Aorta (tissue), 5 donors: ENCODE measurements at regions of chr6 and their contacts with region 1.

Region 1: GRCh38 chr6:84428300-84428907 is 201.0 kb upstream of the CEP162 start:
- DNase-seq: peak; percentile 63 to 89
- ATAC-seq: peak; percentile 83
- H3K4me3 ChIP-seq: peak overlapping the region in 1 of 2 donors; percentile 41
- H3K27ac ChIP-seq: no peak overlapping the region
- H3K4me1 ChIP-seq: peaks cover 0 to 7% of the 10 kb centered on the region in 2 donors
- H3K27me3 ChIP-seq: no peaks in the 10 kb centered on the region

Region 2: DNA sequence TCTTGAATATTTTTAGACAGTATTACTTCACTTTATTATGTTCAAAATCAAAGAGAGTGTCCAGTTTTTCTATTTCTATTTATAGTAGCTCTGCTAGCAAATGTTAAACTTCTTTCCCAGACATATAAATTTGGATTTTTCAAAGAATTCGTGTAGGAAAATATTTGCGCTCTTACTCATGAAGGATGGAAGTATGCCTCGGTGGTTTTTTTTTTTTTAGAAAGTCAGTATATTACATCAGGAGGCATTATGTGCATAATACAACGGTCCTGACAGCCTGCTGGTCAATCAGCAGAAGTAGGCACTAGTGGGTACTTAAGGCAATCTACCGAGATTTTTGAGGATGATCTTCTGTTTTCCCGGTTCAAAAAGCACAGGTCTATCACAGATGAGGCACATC is 86.7 kb after region 1 on chr6:
- intact Hi-C with region 1: loop called in 1 of 2 experiments (anchors 10 kb)
- DNase-seq: no peak
- ATAC-seq: peak; percentile 60
- H3K4me3 ChIP-seq: peak overlapping the region in 1 of 2 donors; percentile 79
- H3K27ac ChIP-seq: peak overlapping the region; percentile 47 to 76
- H3K4me1 ChIP-seq: peaks cover 3 to 4% of the 10 kb centered on the region in 2 donors
- H3K27me3 ChIP-seq: no peaks in the 10 kb centered on the region

Region 3: GRCh38 chr6:84568971-84569370 is 140.6 kb after region 1 on chr6:
- intact Hi-C with region 1: loop called (anchors 2 kb)
- DNase-seq: no peak
- ATAC-seq: no peak
- H3K4me3 ChIP-seq: no peak overlapping the region
- H3K27ac ChIP-seq: no peak overlapping the region
- H3K4me1 ChIP-seq: no peaks in the 10 kb centered on the region
- H3K27me3 ChIP-seq: no peaks in the 10 kb centered on the region

Region 4: DNA sequence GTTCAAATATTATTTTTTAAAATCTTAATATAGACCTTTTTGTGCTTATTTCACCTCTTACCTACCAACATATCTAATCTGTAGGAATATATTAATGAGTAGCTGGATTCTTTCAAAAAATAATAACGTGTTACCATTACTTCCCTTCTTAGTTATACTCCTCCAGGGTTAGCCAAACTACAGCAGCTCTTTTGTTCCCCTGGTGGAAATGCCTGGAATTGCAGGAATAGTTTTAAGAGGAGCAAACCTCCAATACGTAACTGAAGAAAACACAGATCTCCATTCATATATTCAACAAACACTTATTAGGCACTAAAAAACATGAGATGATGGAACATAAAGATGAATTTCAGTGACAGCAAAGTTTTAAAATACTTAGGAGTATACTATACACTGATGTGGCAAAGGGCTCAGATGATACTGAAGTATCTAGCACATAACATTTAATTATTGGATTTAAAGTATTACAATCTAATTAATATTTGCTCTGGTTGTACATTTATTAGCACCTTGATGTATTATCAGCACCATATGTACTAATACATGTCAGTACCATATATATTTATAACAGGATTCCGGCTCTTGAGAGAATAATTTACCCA is 257.7 kb after region 1 on chr6:
- intact Hi-C with region 1: loop called (anchors 10 kb)
- DNase-seq: no peak
- ATAC-seq: no peak
- H3K4me3 ChIP-seq: no peak overlapping the region
- H3K27ac ChIP-seq: no peak overlapping the region
- H3K4me1 ChIP-seq: peaks cover 0 to 3% of the 10 kb centered on the region in 2 donors
- H3K27me3 ChIP-seq: no peaks in the 10 kb centered on the region

Region 5: DNA sequence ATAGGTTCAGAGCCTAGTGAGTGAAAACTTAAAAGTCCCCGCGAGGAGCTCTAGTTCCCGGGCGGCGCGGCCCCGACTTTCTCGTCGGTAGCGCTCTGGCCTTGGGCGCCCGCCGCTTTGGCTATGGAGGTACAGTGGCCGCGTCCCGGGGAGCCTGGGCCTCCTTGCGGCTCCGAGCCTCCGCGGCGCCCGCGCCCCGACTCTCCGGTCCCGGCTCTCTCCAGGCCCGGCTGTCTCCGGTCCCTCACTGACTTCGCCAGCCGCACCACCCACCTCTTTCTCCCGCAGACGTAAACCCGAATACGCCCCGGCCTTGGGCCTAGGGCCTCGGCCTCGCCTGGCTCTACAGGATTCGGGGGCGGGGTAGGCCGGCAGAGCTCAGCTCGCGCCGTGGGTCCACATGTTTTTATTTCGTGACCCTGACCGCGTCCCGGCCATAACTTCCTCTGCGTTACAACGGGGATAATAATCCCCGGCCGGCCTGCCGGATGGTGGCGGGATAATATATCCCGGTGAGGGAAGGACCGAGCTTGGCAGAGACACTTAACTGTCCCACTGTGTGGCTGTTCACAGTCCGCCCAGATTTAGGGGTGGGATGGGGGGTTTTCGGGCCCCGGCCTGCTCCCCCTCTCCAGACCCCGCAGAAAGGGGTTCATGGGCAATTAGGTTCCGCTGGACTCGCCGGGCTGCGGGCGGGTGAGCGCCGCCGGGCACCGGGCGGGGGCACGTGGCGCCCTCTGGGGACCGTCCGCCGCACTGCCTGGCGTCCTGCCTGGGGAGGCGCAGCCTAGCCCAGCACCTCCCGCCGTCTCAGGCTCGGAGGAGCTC is 346.0 kb after region 1 on chr6:
- intact Hi-C with region 1: loop called (anchors 2 to 5 kb)
- DNase-seq: peak; percentile 72 to 93
- ATAC-seq: peak; percentile 91
- H3K4me3 ChIP-seq: peak overlapping the region; percentile 22 to 55
- H3K27ac ChIP-seq: peak overlapping the region; percentile 83 to 89
- H3K4me1 ChIP-seq: no peaks in the 10 kb centered on the region
- H3K27me3 ChIP-seq: no peaks in the 10 kb centered on the region

Region 6: DNA sequence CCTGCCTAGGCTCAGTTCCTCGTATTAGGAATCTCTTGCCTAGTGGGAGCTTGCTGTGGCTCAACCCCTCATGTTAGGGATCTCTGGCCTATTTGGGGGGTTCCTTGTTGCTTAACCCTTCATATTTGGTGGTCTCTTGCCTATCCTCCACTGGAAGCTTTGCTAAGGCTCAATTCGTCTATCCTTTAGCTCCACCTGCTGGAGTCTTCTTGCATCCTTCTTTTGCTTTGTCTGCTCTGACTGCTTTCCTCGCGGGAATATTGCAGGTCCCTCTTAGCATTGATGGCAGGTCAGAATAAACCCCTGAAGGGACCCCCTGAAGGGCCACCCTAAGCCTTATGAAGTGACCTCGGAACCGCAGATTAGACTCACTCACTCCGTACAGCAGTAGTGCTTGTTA is 539.0 kb after region 1 on chr6:
- intact Hi-C with region 1: loop called in 1 of 2 experiments (anchors 10 kb)
- DNase-seq: no peak
- ATAC-seq: no peak
- H3K4me3 ChIP-seq: no peak overlapping the region
- H3K27ac ChIP-seq: no peak overlapping the region
- H3K4me1 ChIP-seq: no peaks in the 10 kb centered on the region
- H3K27me3 ChIP-seq: no peaks in the 10 kb centered on the region

Region 7: GRCh38 chr6:85126485-85127167 is 698.2 kb after region 1 on chr6:
- intact Hi-C with region 1: loop called in 1 of 2 experiments (anchors 10 kb)
- DNase-seq: peak; percentile 47 to 85
- ATAC-seq: peak; percentile 83
- H3K4me3 ChIP-seq: no peak overlapping the region
- H3K27ac ChIP-seq: no peak overlapping the region
- H3K4me1 ChIP-seq: no peaks in the 10 kb centered on the region
- H3K27me3 ChIP-seq: no peaks in the 10 kb centered on the region

Region 8: GRCh38 chr6:85143676-85144075 is 715.3 kb after region 1 on chr6:
- intact Hi-C with region 1: no loop called
- DNase-seq: no peak
- ATAC-seq: no peak
- H3K4me3 ChIP-seq: no peak overlapping the region
- H3K27ac ChIP-seq: no peak overlapping the region
- H3K4me1 ChIP-seq: no peaks in the 10 kb centered on the region
- H3K27me3 ChIP-seq: no peaks in the 10 kb centered on the region